ENCODE measurements at regions of chr4 and their contacts with region 1.

Region 1: DNA sequence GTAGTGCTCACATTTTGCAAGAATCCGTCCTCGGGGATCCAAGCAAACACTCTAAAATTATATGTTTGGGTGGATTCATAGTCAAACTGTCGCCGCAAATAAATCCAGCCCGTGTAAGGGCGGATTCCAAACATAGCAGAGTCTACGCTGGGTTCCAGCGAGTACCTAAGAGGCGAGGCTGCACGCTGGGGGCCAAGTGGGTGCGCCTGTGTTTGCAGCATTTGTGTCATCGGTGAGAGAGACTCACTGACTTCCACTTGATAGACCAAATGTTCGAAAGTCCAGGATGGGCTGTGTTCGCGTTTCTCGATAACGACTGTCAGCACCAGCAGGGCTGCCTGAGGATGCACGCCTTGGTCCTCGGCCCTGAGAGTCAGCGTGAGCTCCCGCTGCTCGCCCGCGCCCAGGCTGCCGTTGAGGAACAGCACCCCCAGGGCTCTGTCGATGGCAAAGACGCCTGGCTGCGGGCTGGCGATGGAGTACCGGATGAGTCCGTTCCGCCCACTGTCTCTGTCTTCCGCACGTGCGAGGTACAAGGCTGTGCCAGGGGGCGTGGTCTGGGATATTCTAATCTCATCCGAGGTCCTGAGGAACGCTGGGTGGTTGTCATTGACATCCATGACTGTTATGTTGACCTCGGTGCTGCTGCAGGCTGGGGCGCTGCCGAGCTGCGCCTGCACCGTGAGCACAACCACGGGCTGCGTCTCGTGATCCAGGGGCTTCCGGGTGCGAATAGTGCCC is 158.7 kb downstream of the DCHS2 start:
- DNase-seq: no peak
- H3K4me3 Mint-ChIP-seq: no peak overlapping the region
- H3K27ac Mint-ChIP-seq: no peak overlapping the region
- H3K4me1 Mint-ChIP-seq: no peaks in the 10 kb centered on the region
- H3K27me3 Mint-ChIP-seq: no peaks in the 10 kb centered on the region
- CTCF ChIP-seq: no peak

Region 2: DNA sequence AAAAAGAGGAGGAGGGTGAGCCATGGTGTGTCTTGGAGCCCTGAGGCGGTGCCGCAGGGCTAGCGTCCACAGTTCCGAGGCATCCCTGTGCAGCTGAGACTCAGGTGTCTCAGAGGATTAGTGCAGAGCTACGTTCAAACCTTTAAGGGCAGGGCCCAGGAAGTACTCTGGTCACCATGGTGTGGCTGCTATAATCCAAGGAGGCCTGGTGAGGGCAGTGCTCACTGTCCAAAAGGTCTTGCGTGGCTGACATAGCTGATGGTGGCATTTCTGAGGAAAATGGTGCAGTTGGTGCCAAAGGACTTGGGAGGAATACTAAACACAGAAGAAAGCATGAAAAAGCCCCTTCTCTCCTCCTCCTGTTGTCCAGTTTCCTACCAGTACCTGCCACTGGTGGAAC is 11.8 kb after region 1 on chr4:
- CTCF ChIA-PET with region 1: interaction called, 18 read pairs
- POLR2A ChIA-PET with region 1: interaction called, 3 read pairs
- intact Hi-C with region 1: no loop called
- DNase-seq: peak; percentile 17
- H3K4me3 Mint-ChIP-seq: no peak overlapping the region
- H3K27ac Mint-ChIP-seq: no peak overlapping the region
- H3K4me1 Mint-ChIP-seq: no peaks in the 10 kb centered on the region
- H3K27me3 Mint-ChIP-seq: no peaks in the 10 kb centered on the region
- CTCF ChIP-seq: no peak

Region 3: GRCh38 chr4:154349829-154350228 is 17.0 kb after region 1 on chr4:
- CTCF ChIA-PET with region 1: interaction called, 18 read pairs
- POLR2A ChIA-PET with region 1: interaction called, 3 read pairs
- intact Hi-C with region 1: no loop called
- DNase-seq: peak; percentile 33
- H3K4me3 Mint-ChIP-seq: no peak overlapping the region
- H3K27ac Mint-ChIP-seq: no peak overlapping the region
- H3K4me1 Mint-ChIP-seq: no peaks in the 10 kb centered on the region
- H3K27me3 Mint-ChIP-seq: no peaks in the 10 kb centered on the region
- CTCF ChIP-seq: peak; percentile 51

Region 4: DNA sequence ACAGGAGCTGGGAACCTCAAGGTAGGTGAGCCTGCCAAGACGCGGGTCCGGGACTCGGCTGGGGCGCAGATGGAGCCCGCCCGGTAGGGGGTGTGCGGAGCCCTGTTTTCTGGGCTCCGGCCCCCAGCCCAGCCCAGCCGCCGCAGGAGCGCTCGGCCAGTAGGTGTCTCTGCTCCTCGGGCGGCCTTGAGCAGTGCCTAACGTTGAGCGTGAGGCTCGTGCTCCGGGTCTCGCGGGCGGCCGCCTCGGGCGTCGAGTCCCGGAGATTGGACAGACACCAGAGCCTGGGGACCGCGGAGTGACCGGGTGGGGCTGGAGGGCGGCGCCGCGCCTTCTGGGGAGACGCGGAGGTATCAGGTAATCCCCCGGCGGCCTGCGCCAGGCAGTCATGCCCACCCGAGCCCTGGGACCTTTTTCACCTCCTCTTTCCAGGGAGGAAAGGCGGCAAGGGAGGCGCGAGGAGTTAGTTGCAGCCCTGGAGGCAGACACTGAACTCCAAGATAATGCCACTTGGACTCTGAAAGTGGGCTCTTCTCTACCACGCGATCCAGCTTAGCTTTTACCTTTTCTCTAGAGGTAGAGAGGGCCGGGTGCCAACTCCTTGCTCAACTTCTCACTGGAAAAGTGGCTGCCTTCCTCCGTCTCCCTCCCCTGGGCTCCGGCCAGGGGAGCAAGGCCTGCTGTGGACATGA is 294.1 kb after region 1 on chr4:
- CTCF ChIA-PET with region 1: interaction called, 5 read pairs
- POLR2A ChIA-PET with region 1: no interaction called
- intact Hi-C with region 1: loop called (anchors 10 kb)
- DNase-seq: peak; percentile 83
- H3K4me3 Mint-ChIP-seq: no peak overlapping the region
- H3K27ac Mint-ChIP-seq: no peak overlapping the region
- H3K4me1 Mint-ChIP-seq: no peaks in the 10 kb centered on the region
- H3K27me3 Mint-ChIP-seq: no peaks in the 10 kb centered on the region
- CTCF ChIP-seq: peak; percentile 75

Measured in MCF 10A (cell line).